Heart right ventricle (tissue), 16 donors: ENCODE measurements at regions of chr9 and their contacts with region 1.

Region 1: GRCh38 chr9:13128224-13128860 is 151.2 kb downstream of the MPDZ start:
- DNase-seq: no peak
- ATAC-seq: no peak
- H3K4me3 ChIP-seq: no peak overlapping the region
- H3K27ac ChIP-seq: no peak overlapping the region
- H3K4me1 ChIP-seq: no peaks in the 10 kb centered on the region
- H3K27me3 ChIP-seq: no peaks in the 10 kb centered on the region
- CTCF ChIP-seq: no peak

Region 2: DNA sequence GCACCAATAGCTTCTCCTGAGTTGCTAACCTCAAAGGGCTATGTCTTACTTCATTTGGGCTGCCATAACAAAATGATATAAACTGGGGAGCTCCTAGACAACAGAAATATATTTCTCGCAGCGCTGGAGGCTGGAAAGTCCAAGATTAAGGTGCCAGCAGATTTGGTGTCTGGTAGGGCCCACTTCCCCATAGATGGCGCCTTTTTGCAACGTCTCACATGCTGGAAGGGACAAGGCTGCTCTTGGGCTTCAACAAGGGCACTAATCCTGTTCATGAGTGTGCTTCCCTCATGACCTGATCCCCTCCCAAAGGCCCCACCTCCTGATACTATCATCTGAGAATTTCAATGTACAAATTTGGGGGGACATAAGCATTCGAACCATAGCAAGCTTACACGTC is 71.6 kb before region 1 on chr9:
- intact Hi-C with region 1: no loop called
- DNase-seq: no peak
- ATAC-seq: no peak
- H3K4me3 ChIP-seq: no peak overlapping the region
- H3K27ac ChIP-seq: no peak overlapping the region
- H3K4me1 ChIP-seq: no peaks in the 10 kb centered on the region
- H3K27me3 ChIP-seq: no peaks in the 10 kb centered on the region
- CTCF ChIP-seq: no peak

Region 3: DNA sequence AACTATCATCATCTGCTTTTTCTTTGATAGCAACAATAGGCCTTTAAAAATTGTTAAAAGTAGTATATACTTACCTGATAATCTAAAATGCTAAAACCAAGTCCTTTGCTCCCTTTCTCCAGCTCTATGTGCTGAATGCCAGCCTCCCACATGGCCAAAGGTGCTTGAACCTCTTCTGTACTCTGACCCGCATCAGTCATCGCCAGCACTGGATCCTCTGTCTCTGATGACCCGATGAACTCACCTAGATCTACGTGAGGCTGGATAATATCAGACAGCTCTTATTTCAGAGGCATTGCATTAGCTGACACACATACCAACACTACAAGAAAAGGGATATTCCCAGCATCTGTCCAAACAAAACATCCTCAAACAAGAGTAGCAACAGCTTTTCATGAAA is 61.7 kb after region 1 on chr9:
- intact Hi-C with region 1: loop called in 2 of 10 experiments (anchors 10 kb)
- DNase-seq: no peak
- ATAC-seq: no peak
- H3K4me3 ChIP-seq: no peak overlapping the region
- H3K27ac ChIP-seq: no peak overlapping the region
- H3K4me1 ChIP-seq: no peaks in the 10 kb centered on the region
- H3K27me3 ChIP-seq: no peaks in the 10 kb centered on the region
- CTCF ChIP-seq: no peak